B cell (primary cell): ENCODE measurements at regions of chr17 and their contacts with region 1.

Region 1: GRCh38 chr17:28763804-28764266 is 20.0 kb downstream of the TRAF4 start:
- DNase-seq: peak; percentile 83
- ATAC-seq: peak; percentile 85
- H3K4me3 ChIP-seq: no peak overlapping the region
- H3K4me3 Mint-ChIP-seq: no peak overlapping the region
- H3K27ac ChIP-seq: no peak overlapping the region
- H3K27ac Mint-ChIP-seq: no peak overlapping the region
- H3K4me1 ChIP-seq: peaks cover 0 to 8% of the 10 kb centered on the region in 2 donors
- H3K4me1 Mint-ChIP-seq: peaks cover 11% of the 10 kb centered on the region
- H3K27me3 ChIP-seq: no peaks in the 10 kb centered on the region
- H3K27me3 Mint-ChIP-seq: no peaks in the 10 kb centered on the region
- CTCF ChIP-seq: peak; percentile 94

Region 2: DNA sequence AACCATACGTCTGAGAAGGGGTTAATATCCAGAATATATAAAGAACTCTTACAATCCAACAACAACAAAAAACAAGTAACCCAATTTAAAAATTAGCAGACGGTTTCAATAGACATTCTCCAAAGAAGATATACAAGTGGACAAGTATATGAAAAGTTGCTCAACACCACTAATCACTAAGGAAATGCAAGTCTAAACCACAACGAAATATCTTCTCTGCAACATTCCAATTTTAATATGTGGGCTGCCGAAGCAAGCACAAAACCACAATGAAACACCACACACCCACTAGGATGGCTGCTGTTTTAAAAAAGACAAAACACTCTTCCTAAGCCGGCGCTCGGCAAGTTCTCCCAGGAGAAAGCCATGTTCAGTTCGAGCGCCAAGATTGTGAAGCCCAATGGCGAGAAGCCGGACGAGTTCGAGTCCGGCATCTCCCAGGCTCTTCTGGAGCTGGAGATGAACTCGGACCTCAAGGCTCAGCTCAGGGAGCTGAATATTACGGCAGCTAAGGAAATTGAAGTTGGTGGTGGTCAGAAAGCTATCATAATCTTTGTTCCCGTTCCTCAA is 296.3 kb before region 1 on chr17:
- CTCF ChIA-PET with region 1: no interaction called
- POLR2A ChIA-PET with region 1: no interaction called
- intact Hi-C with region 1: no loop called
- DNase-seq: no peak
- ATAC-seq: no peak
- H3K4me3 ChIP-seq: no peak overlapping the region
- H3K4me3 Mint-ChIP-seq: no peak overlapping the region
- H3K27ac ChIP-seq: no peak overlapping the region
- H3K27ac Mint-ChIP-seq: no peak overlapping the region
- H3K4me1 ChIP-seq: no peaks in the 10 kb centered on the region
- H3K4me1 Mint-ChIP-seq: no peaks in the 10 kb centered on the region
- H3K27me3 ChIP-seq: peaks cover 0 to 3% (median 0%) of the 10 kb centered on the region in 4 experiments
- H3K27me3 Mint-ChIP-seq: peaks cover 44% of the 10 kb centered on the region
- CTCF ChIP-seq: no peak

Region 3: GRCh38 chr17:28743225-28744103 is 20.4 kb before region 1 on chr17 and contains the start of gene TRAF4:
- CTCF ChIA-PET with region 1: interaction called, 92 read pairs
- POLR2A ChIA-PET with region 1: no interaction called
- intact Hi-C with region 1: no loop called
- DNase-seq: peak; percentile 94
- ATAC-seq: peak; percentile 72
- H3K4me3 ChIP-seq: peak within 1 kb of the TSS; percentile 58 to 98 (median 88)
- H3K4me3 Mint-ChIP-seq: peak within 1 kb of the TSS; percentile 94
- H3K27ac ChIP-seq: peak within 1 kb of the TSS; percentile 86 to 100
- H3K27ac Mint-ChIP-seq: peak within 1 kb of the TSS; percentile 94
- H3K4me1 ChIP-seq: peaks cover 76 to 79% of the 10 kb centered on the region in 2 donors
- H3K4me1 Mint-ChIP-seq: peaks cover 63% of the 10 kb centered on the region
- H3K27me3 ChIP-seq: no peaks in the 10 kb centered on the region
- H3K27me3 Mint-ChIP-seq: no peaks in the 10 kb centered on the region
- CTCF ChIP-seq: no peak
- total RNA-seq, gene TRAF4: 226 and 235 TPM in 2 replicates

Region 4: GRCh38 chr17:28828294-28829040 is 64.6 kb after region 1 on chr17:
- CTCF ChIA-PET with region 1: interaction called, 22 read pairs
- POLR2A ChIA-PET with region 1: no interaction called
- intact Hi-C with region 1: no loop called
- DNase-seq: no peak
- ATAC-seq: no peak
- H3K4me3 ChIP-seq: no peak overlapping the region
- H3K4me3 Mint-ChIP-seq: no peak overlapping the region
- H3K27ac ChIP-seq: no peak overlapping the region
- H3K27ac Mint-ChIP-seq: no peak overlapping the region
- H3K4me1 ChIP-seq: no peaks in the 10 kb centered on the region
- H3K4me1 Mint-ChIP-seq: peaks cover 2% of the 10 kb centered on the region
- H3K27me3 ChIP-seq: no peaks in the 10 kb centered on the region
- H3K27me3 Mint-ChIP-seq: no peaks in the 10 kb centered on the region
- CTCF ChIP-seq: no peak

Region 5: DNA sequence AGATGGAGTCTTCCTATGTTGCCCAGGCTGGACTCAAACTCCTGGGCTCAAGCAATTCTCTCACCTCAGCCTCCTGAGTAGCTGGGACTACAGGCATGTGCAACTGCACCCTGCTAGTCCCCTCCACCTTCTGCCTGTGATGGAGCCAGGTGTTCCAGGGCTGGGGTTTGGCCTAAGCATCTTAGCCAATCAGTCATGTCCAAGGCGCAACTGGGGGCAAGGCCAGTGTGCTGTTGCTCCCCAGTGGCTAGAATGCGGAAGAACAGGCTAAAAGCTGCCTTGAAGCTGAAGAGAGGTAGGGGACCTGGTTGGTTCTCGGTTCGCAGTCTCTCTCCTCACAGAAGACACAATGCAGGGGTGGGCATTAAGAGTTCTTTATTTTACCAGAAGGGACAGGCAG is 115.1 kb after region 1 on chr17:
- CTCF ChIA-PET with region 1: interaction called, 15 read pairs
- POLR2A ChIA-PET with region 1: no interaction called
- intact Hi-C with region 1: no loop called
- DNase-seq: no peak
- ATAC-seq: no peak
- H3K4me3 ChIP-seq: no peak overlapping the region
- H3K4me3 Mint-ChIP-seq: no peak overlapping the region
- H3K27ac ChIP-seq: no peak overlapping the region
- H3K27ac Mint-ChIP-seq: peak overlapping the region; percentile 37
- H3K4me1 ChIP-seq: no peaks in the 10 kb centered on the region
- H3K4me1 Mint-ChIP-seq: no peaks in the 10 kb centered on the region
- H3K27me3 ChIP-seq: no peaks in the 10 kb centered on the region
- H3K27me3 Mint-ChIP-seq: no peaks in the 10 kb centered on the region
- CTCF ChIP-seq: no peak

Region 6: DNA sequence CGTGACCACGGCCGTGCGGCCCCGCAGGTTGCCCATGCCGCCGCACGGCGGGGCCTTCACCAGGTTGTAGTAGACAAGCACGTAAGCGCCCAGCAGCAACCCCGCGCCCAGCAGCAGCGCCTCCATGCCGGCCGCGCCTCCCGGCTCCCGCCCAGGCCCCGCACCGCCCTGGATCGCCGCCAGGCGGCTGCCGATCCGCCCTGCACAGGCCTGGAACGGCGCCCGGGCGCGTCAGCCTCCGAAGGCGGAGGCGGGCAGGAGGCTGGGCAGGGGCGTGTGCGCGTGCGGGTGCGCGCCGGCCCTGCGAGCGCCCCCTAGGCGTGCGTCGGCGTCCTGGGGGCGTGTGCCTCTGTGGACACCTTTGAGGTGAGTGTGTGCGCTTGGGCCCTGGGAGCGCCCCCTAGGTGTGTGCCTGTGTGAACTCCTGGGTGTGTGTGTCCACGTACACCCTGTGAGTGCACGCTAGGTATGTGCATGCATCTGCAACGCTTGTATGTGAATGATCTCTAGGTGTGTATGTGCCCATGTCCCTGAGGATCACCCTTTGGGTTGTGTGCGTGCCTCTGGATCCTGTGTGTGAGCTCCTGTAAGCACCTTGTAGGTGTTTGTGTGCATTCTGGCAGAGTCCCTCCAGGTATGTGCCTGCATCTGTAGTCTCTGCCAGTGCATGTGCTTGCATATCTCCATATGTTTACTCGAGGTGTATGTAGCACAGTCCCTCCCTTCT is 139.1 kb after region 1 on chr17 and contains the start of gene DHRS13:
- CTCF ChIA-PET with region 1: interaction called, 137 read pairs
- POLR2A ChIA-PET with region 1: interaction called, 6 read pairs
- intact Hi-C with region 1: loop called (anchors 1 kb)
- DNase-seq: peak; percentile 98
- ATAC-seq: peak; percentile 90
- H3K4me3 ChIP-seq: peak within 1 kb of the TSS; percentile 68 to 90 (median 76)
- H3K4me3 Mint-ChIP-seq: peak within 1 kb of the TSS; percentile 88
- H3K27ac ChIP-seq: peak within 1 kb of the TSS; percentile 61 to 77
- H3K27ac Mint-ChIP-seq: peak within 1 kb of the TSS; percentile 88
- H3K4me1 ChIP-seq: peaks cover 18 to 32% of the 10 kb centered on the region in 2 donors
- H3K4me1 Mint-ChIP-seq: peaks cover 34% of the 10 kb centered on the region
- H3K27me3 ChIP-seq: no peaks in the 10 kb centered on the region
- H3K27me3 Mint-ChIP-seq: no peaks in the 10 kb centered on the region
- CTCF ChIP-seq: peak; percentile 100
- total RNA-seq, gene DHRS13: 27.1 and 28.1 TPM in 2 replicates

Region 7: GRCh38 chr17:28946239-28946638 is 182.4 kb after region 1 on chr17:
- CTCF ChIA-PET with region 1: interaction called, 58 read pairs
- POLR2A ChIA-PET with region 1: interaction called, 4 read pairs
- intact Hi-C with region 1: loop called (anchors 1 kb)
- DNase-seq: no peak
- ATAC-seq: no peak
- H3K4me3 ChIP-seq: no peak overlapping the region
- H3K4me3 Mint-ChIP-seq: peak overlapping the region; percentile 70
- H3K27ac ChIP-seq: no peak overlapping the region
- H3K27ac Mint-ChIP-seq: peak overlapping the region; percentile 50
- H3K4me1 ChIP-seq: peaks cover 37 to 43% of the 10 kb centered on the region in 2 donors
- H3K4me1 Mint-ChIP-seq: peaks cover 65% of the 10 kb centered on the region
- H3K27me3 ChIP-seq: no peaks in the 10 kb centered on the region
- H3K27me3 Mint-ChIP-seq: no peaks in the 10 kb centered on the region
- CTCF ChIP-seq: no peak